ENCODE measurements at regions of chr12 and their contacts with region 1.

Region 1: GRCh38 chr12:14384783-14385638 is 19.5 kb downstream of the ATF7IP start:
- DNase-seq: no peak
- ATAC-seq: peak; percentile 89
- H3K4me3 Mint-ChIP-seq: peak overlapping the region; percentile 57
- H3K27ac Mint-ChIP-seq: peak overlapping the region; percentile 85
- H3K4me1 Mint-ChIP-seq: peaks cover 57% of the 10 kb centered on the region
- H3K27me3 Mint-ChIP-seq: no peaks in the 10 kb centered on the region
- CTCF ChIP-seq: no peak

Region 2: DNA sequence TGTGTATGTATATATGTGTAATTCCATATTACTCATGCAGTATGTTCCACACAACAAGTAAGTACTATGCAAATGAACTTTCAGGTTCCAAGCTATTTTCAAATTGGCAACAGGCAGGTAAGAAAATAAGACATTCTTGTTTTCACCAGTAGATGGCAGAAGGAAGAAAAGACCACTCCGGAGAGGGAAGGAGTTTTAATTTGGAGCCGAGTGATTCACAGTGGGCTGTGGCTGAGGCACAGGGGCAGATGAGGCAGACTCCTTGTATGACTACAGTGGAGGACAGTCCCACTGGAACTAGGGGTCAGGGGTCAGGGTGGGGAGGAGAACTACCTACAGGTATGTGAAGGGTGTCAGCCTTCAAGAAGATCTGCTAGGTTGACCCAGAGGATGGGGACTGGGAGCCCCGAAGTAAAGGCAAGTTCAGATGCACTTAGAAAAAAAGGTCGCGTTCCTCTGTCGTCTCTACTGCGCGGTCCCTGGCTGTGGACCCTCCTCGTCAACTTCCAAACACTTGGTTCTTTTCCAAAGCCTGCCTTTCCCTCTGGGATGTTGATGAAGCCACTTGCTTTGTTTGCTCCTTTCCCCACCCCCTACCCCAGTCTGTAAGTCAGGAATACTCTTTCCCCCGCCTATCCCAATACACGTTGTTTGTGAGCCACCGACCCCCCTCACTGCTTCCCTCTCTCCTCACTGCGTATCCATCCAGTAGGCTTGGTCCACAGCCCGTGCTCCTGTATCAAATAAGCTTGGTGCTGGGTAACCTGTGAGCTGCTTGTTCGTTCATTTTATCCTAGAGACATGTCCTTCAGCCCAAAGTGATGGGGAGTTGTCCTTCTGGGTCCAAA is 1547.8 kb before region 1 on chr12:
- CTCF ChIA-PET with region 1: no interaction called
- POLR2A ChIA-PET with region 1: interaction called, 10 read pairs
- intact Hi-C with region 1: no loop called
- DNase-seq: no peak
- ATAC-seq: peak; percentile 65
- H3K4me3 Mint-ChIP-seq: no peak overlapping the region
- H3K27ac Mint-ChIP-seq: no peak overlapping the region
- H3K4me1 Mint-ChIP-seq: peaks cover 4% of the 10 kb centered on the region
- H3K27me3 Mint-ChIP-seq: no peaks in the 10 kb centered on the region
- CTCF ChIP-seq: no peak

Region 3: GRCh38 chr12:14373217-14373616 is 11.8 kb before region 1 on chr12:
- CTCF ChIA-PET with region 1: interaction called, 3 read pairs
- POLR2A ChIA-PET with region 1: interaction called, 10 read pairs
- intact Hi-C with region 1: loop called (anchors 1 kb)
- DNase-seq: no peak
- ATAC-seq: no peak
- H3K4me3 Mint-ChIP-seq: no peak overlapping the region
- H3K27ac Mint-ChIP-seq: peak overlapping the region; percentile 68
- H3K4me1 Mint-ChIP-seq: peaks cover 61% of the 10 kb centered on the region
- H3K27me3 Mint-ChIP-seq: no peaks in the 10 kb centered on the region
- CTCF ChIP-seq: no peak